Caco-2 (cell line): ENCODE measurements at regions of chr14 and their contacts with region 1.

Region 1: DNA sequence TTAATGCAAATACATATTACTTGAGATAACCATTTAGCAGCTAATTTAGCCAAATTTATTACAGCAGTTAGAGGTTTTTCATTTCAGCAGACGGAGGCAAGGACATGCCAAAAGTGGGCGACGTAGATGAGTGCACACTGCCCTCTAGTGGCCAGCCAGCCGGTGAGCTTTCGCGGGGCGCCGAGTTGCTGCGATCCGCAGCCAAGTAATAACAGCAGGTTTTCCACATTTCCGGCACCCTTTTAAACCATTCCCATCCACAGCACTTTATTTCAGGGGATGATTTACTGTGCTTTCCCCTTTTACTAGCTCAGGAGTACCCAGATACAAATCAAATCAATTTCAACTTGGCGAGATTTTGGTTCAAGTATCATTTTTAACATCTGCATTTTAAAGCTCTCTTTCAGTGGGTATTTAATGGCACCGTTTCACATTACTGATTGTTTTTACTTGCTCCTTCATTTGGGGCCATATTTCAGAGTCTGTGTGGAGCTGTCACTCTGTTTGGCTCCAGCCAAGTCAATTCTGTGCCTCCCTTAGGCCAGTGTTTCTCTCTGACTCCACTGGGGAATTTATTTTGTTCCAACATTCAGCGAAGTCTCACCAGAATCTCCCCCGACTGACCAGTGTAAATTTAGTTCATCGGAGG is 158.0 kb downstream of the EGLN3 start:
- DNase-seq: peak; percentile 64 to 81
- H3K4me3 ChIP-seq: no peak overlapping the region
- H3K4me3 Mint-ChIP-seq: no peak overlapping the region
- H3K27ac Mint-ChIP-seq: no peak overlapping the region
- H3K4me1 ChIP-seq: peaks cover 5% of the 10 kb centered on the region; the same call in 1 of the 2 replicates
- H3K4me1 Mint-ChIP-seq: no peaks in the 10 kb centered on the region
- H3K27me3 ChIP-seq: 0 out of 2 replicates have a peak, but pooled peaks cover 2% of the 10 kb centered on the region
- H3K27me3 Mint-ChIP-seq: peaks cover 9% of the 10 kb centered on the region
- CTCF ChIP-seq: peak; percentile 89 to 90

Region 2: GRCh38 chr14:33432407-33433023 is 360.3 kb before region 1 on chr14:
- CTCF ChIA-PET with region 1: no interaction called
- POLR2A ChIA-PET with region 1: no interaction called
- intact Hi-C with region 1: loop called (anchors 2 kb)
- DNase-seq: peak in 1 of 2 experiments; percentile 10
- H3K4me3 ChIP-seq: no peak overlapping the region
- H3K4me3 Mint-ChIP-seq: no peak overlapping the region
- H3K27ac Mint-ChIP-seq: no peak overlapping the region
- H3K4me1 ChIP-seq: no peaks in the 10 kb centered on the region
- H3K4me1 Mint-ChIP-seq: no peaks in the 10 kb centered on the region
- H3K27me3 ChIP-seq: no peaks in the 10 kb centered on the region
- H3K27me3 Mint-ChIP-seq: peaks cover 5% of the 10 kb centered on the region
- CTCF ChIP-seq: peak; percentile 28 to 39

Region 3: GRCh38 chr14:33475623-33476022 is 317.2 kb before region 1 on chr14:
- CTCF ChIA-PET with region 1: interaction called, 5 read pairs
- POLR2A ChIA-PET with region 1: no interaction called
- intact Hi-C with region 1: loop called (anchors 1 kb)
- DNase-seq: peak; percentile 44 to 48
- H3K4me3 ChIP-seq: no peak overlapping the region
- H3K4me3 Mint-ChIP-seq: no peak overlapping the region
- H3K27ac Mint-ChIP-seq: no peak overlapping the region
- H3K4me1 ChIP-seq: no peaks in the 10 kb centered on the region
- H3K4me1 Mint-ChIP-seq: no peaks in the 10 kb centered on the region
- H3K27me3 ChIP-seq: no peaks in the 10 kb centered on the region; the same call in 1 of the 2 replicates
- H3K27me3 Mint-ChIP-seq: peaks cover 20% of the 10 kb centered on the region
- CTCF ChIP-seq: peak; percentile 30 to 44

Region 4: GRCh38 chr14:33676135-33676566 is 116.7 kb before region 1 on chr14:
- CTCF ChIA-PET with region 1: interaction called, 20 read pairs
- POLR2A ChIA-PET with region 1: no interaction called
- intact Hi-C with region 1: loop called (anchors 1 kb)
- DNase-seq: peak; percentile 62 to 67
- H3K4me3 ChIP-seq: no peak overlapping the region
- H3K4me3 Mint-ChIP-seq: no peak overlapping the region
- H3K27ac Mint-ChIP-seq: no peak overlapping the region
- H3K4me1 ChIP-seq: no peaks in the 10 kb centered on the region
- H3K4me1 Mint-ChIP-seq: peaks cover 6% of the 10 kb centered on the region
- H3K27me3 ChIP-seq: no peaks in the 10 kb centered on the region
- H3K27me3 Mint-ChIP-seq: peaks cover 10% of the 10 kb centered on the region
- CTCF ChIP-seq: peak; percentile 59 to 68

Region 5: DNA sequence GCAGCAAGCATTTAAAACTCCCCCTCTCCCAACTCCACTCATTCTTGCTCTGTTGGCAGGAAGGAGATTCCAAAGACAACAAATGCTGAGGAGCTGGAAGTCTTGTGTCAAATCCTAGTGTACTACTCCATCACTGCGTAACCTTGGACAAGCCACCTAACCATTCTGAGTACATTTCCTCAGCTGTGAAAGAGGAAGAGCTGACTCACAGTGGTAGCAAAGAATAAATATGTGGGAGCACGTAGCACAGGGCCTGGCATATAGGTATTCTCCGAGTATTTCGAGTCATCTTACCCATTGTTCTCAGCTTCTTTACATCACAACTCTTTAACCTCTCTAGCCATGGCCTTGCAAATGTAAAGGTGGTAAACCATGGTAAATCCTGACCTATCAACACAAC is 129.3 kb after region 1 on chr14:
- CTCF ChIA-PET with region 1: no interaction called
- POLR2A ChIA-PET with region 1: no interaction called
- intact Hi-C with region 1: no loop called
- DNase-seq: no peak
- H3K4me3 ChIP-seq: no peak overlapping the region
- H3K4me3 Mint-ChIP-seq: no peak overlapping the region
- H3K27ac Mint-ChIP-seq: no peak overlapping the region
- H3K4me1 ChIP-seq: no peaks in the 10 kb centered on the region
- H3K4me1 Mint-ChIP-seq: no peaks in the 10 kb centered on the region
- H3K27me3 ChIP-seq: no peaks in the 10 kb centered on the region
- H3K27me3 Mint-ChIP-seq: no peaks in the 10 kb centered on the region
- CTCF ChIP-seq: no peak